Psoas muscle (tissue), 8 donors: ENCODE measurements at regions of chr6 and their contacts with region 1.

Region 1: GRCh38 chr6:111709615-111710398 is 104.1 kb upstream of the TRAF3IP2 start:
- DNase-seq: peak; percentile 35 to 73
- ATAC-seq: peak; percentile 65 to 88 (median 76)
- H3K4me3 ChIP-seq: peak overlapping the region; percentile 61
- H3K27ac ChIP-seq: no peak overlapping the region
- H3K4me1 ChIP-seq: peaks cover 26% of the 10 kb centered on the region
- H3K27me3 ChIP-seq: no peaks in the 10 kb centered on the region
- CTCF ChIP-seq: peak; percentile 84

Region 2: GRCh38 chr6:111793711-111794111 is 83.9 kb after region 1 on chr6:
- intact Hi-C with region 1: no loop called
- DNase-seq: no peak
- ATAC-seq: peak in 1 of 4 donors; percentile 22
- H3K4me3 ChIP-seq: no peak overlapping the region
- H3K27ac ChIP-seq: no peak overlapping the region
- H3K4me1 ChIP-seq: no peaks in the 10 kb centered on the region
- H3K27me3 ChIP-seq: no peaks in the 10 kb centered on the region
- CTCF ChIP-seq: no peak

Region 3: DNA sequence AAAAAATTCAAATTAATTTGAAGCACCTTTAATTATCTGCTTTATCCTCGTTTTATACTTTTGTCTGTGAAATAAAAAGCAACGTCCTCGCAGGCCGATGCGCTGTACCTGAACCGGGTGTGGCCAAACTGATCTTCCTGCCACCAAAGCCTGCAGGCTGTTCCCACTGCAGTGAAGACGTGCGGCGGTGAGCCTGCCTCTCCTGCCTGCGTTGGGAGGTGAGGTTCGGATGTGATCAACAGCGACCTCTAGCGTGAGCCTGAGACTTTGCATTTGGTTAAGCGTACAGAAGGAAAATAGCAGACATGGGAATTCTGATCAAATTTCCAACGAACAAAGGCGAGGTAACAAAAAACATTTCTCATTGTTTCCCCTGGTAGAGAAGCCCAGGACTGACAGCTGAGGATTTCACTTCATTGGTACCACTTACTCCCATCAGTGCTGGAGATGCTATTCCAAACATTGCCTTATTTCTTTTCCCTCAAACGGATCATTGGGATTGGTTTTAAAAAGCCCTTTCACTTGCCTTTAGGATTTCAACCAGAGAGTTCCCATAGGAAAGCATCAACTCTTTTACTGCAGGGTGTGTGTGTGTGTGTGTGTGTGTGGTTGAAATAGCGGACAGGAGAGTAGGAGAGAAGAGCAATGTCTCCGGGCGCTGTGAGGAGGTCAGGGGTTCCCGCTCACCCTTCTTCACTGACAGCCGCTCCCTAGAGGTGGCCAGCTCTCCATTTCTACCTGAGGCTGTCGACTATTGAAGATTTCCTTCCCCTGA is 287.5 kb after region 1 on chr6:
- intact Hi-C with region 1: loop called (anchors 1 to 2 kb)
- DNase-seq: peak; percentile 78 to 88
- ATAC-seq: peak; percentile 91 to 96 (median 94)
- H3K4me3 ChIP-seq: peak overlapping the region; percentile 43
- H3K27ac ChIP-seq: no peak overlapping the region
- H3K4me1 ChIP-seq: peaks cover 4% of the 10 kb centered on the region
- H3K27me3 ChIP-seq: no peaks in the 10 kb centered on the region
- CTCF ChIP-seq: peak; percentile 92

Region 4: GRCh38 chr6:112037783-112038216 is 328.0 kb after region 1 on chr6:
- intact Hi-C with region 1: loop called in 1 of 2 experiments (anchors 5 kb)
- DNase-seq: peak; percentile 87 to 90
- ATAC-seq: peak; percentile 74 to 96 (median 92)
- H3K4me3 ChIP-seq: no peak overlapping the region
- H3K27ac ChIP-seq: peak overlapping the region; percentile 58
- H3K4me1 ChIP-seq: peaks cover 4% of the 10 kb centered on the region
- H3K27me3 ChIP-seq: peaks cover 0 to 4% (median 0%) of the 10 kb centered on the region in 3 donors
- CTCF ChIP-seq: no peak

Region 5: DNA sequence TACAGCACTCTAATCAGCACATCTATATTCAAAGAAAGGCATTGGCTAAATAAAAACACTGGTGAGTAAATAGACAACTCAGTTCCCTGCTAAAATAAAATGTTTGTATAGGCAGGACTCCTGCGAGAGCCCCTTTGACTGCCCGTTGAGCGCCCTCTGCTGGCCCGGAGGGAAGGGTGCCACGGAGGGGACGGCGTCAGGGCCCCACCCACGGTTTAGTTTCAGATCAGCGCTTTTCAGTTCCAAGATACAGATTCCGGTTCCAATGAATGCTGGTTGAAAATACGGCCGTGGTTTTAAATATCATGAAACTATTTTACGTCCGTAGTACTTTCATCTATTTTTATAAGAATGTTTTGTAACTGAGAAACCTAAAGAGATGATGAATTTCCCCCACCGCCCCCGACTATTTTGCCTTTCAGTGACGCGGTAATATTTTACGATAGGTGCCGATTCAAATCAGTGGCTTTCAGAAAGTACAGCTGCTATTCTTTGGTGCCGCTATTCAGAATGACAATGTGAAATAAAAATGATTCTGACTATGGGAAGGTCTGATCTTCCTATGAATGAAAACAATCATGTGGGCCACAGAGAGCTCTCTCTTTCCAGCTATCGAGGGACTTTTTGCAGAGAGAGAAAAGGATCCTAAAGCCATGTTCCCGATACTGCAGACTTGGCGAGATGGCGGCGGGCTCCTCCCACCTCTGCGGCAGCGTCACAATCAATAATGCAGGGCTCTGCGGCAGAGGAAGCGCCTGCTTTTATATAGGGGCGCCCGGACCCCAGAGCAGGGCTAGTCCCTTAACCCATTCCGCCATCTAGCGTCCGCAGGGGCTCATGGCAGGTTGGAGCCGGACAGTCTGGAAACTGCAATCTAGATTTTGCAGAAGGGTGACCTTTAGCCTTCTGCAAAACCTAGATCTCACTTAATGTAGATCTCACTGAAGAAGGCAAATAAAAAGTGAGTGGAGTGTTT is 333.5 kb after region 1 on chr6:
- intact Hi-C with region 1: loop called (anchors 1 to 5 kb)
- DNase-seq: peak; percentile 87 to 91
- ATAC-seq: peak; percentile 89 to 97 (median 94)
- H3K4me3 ChIP-seq: peak overlapping the region; percentile 82
- H3K27ac ChIP-seq: peak overlapping the region; percentile 77
- H3K4me1 ChIP-seq: peaks cover 6% of the 10 kb centered on the region
- H3K27me3 ChIP-seq: no peaks in the 10 kb centered on the region
- CTCF ChIP-seq: peak; percentile 94